ENCODE measurements at regions of chr9 and their contacts with region 1.

Region 1: DNA sequence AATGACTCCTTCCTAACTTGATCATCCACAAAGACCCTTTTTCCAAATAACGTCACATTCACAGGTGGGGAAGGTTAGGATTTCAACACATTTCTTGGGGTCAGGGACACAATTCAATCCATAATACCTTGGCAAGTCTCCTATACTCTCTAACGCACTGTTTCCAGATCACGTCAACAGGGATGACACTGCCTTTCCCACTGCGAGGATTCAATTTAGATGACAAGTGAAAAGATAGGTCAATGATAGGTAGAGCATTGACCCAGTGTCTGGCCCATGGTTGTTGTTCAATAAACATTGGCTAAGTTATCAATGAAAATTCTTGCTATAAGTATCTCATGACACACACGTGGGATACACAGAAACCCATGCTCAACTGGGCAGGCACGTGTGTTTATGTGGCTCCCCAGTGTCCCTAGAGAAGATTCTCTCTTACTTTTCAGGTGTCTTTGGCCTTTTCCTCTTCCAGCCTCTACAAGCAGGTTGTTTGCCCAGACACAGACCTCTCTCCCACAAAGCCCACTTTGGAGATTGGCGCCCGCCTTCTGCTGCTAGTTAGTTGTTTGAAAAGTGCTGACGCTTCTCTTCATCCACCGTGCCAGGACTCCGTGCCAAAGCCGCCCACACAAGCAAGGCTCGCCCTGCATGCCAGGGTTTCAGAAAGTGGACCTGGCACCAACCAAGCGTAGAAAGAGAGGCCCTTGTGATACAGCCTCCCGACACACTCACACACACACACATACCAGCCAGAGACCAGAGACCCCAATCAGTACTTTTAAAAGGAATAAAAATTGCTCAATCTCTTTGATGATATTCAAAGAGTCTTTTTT is 594.5 kb downstream of the BNC2 start:
- DNase-seq: no peak
- H3K4me3 ChIP-seq: no peak overlapping the region
- H3K27ac ChIP-seq: no peak overlapping the region
- H3K4me1 ChIP-seq: peaks cover 0 to 9% (median 0%) of the 10 kb centered on the region in 3 donors
- H3K27me3 ChIP-seq: no peaks in the 10 kb centered on the region
- CTCF ChIP-seq: no peak
- POLR2A ChIP-seq: no peak

Region 2: GRCh38 chr9:16848179-16848578 is 572.2 kb after region 1 on chr9:
- intact Hi-C with region 1: loop called (anchors 10 kb)
- DNase-seq: no peak
- H3K4me3 ChIP-seq: no peak overlapping the region
- H3K27ac ChIP-seq: no peak overlapping the region
- H3K4me1 ChIP-seq: peaks cover 0 to 23% (median 6%) of the 10 kb centered on the region in 3 donors
- H3K27me3 ChIP-seq: no peaks in the 10 kb centered on the region
- CTCF ChIP-seq: no peak
- POLR2A ChIP-seq: no peak

Measured in esophagus squamous epithelium (tissue), 5 donors.